HepG2 (cell line): ENCODE measurements at regions of chr6 and their contacts with region 1.

Region 1: GRCh38 chr6:28218271-28219248 is 6.5 kb upstream of the ZSCAN9 start:
- DNase-seq: peak; percentile 70
- ATAC-seq: peak; percentile 93
- H3K4me3 ChIP-seq: peak overlapping the region; percentile 53 to 77 (median 56)
- H3K27ac ChIP-seq: peak overlapping the region; percentile 79
- H3K4me1 ChIP-seq: peaks cover 55% of the 10 kb centered on the region
- H3K27me3 ChIP-seq: no peaks in the 10 kb centered on the region; a peak in 1 of 5 replicates
- CTCF ChIP-seq: peak; percentile 49
- EP300 ChIP-seq: no peak
- POLR2A ChIP-seq: peak; percentile 42 to 77; a peak in 2 of 4 replicates
- RAD21 ChIP-seq: peak; percentile 50

Region 2: DNA sequence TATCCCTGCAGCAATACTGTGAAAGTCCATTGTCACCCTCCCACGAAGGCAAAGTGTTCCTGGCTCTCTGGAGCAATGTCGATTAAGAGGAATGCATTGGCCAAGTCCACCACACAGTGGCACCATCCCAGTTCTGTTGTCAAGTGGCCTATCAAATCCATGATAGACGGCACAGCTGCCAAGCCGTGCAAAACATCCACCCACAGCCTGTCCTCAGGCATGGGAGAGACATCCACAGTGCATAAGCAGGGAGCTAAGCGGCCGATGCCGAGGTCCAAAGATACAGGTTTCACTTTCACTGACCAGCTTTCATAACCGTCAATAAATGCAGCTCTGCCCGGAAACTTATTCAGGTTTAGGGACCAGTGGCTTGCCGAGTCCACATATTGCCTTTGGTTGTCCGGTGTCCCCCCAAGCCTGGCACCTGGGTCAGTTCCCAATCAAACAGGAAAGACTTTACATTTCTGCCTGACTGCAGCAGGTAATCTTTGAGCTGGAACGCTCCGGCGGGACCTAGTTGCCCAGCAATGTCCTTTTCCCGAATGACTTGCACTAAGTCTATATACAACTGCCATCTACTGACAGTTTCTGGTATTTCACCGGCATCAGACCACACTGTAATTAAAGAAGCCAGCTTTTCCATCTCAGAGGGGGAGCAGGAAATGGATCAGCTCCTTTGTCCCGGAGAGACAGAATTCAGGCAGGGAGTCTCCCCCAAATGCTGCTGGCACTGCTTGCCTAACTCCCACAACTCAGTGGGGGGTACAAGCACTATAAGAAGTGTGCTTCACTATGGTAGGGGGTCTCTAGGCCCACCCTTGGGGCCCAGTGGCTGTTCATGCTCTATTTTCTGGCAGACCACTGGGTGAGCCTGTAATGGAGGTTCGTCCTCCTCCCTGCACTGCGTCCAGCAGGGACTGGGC is 137.4 kb after region 1 on chr6:
- CTCF ChIA-PET with region 1: no interaction called
- POLR2A ChIA-PET with region 1: interaction called, 12 read pairs
- in situ Hi-C with region 1: no loop called
- intact Hi-C with region 1: no loop called
- DNase-seq: peak; percentile 90
- ATAC-seq: peak; percentile 89
- H3K4me3 ChIP-seq: peak overlapping the region; percentile 70 to 82 (median 77)
- H3K27ac ChIP-seq: peak overlapping the region; percentile 75
- H3K4me1 ChIP-seq: peaks cover 33% of the 10 kb centered on the region
- H3K27me3 ChIP-seq: no peaks in the 10 kb centered on the region; a peak in 1 of 5 replicates
- CTCF ChIP-seq: peak; percentile 91
- EP300 ChIP-seq: no peak
- POLR2A ChIP-seq: peak in 1 of 2 experiments; percentile 65; a peak in 1 of 4 replicates
- RAD21 ChIP-seq: peak; percentile 81

Region 3: GRCh38 chr6:28940858-28941680 is 722.5 kb after region 1 on chr6:
- CTCF ChIA-PET with region 1: no interaction called
- POLR2A ChIA-PET with region 1: no interaction called
- in situ Hi-C with region 1: no loop called
- intact Hi-C with region 1: no loop called
- DNase-seq: peak; percentile 89
- ATAC-seq: peak; percentile 73
- H3K4me3 ChIP-seq: peak overlapping the region; percentile 68 to 85 (median 79)
- H3K27ac ChIP-seq: peak overlapping the region; percentile 63
- H3K4me1 ChIP-seq: peaks cover 44% of the 10 kb centered on the region
- H3K27me3 ChIP-seq: peaks cover 0 to 7% of the 10 kb centered on the region in 2 experiments; a peak in 1 of 5 replicates
- CTCF ChIP-seq: peak; percentile 13
- EP300 ChIP-seq: no peak
- POLR2A ChIP-seq: no peak
- RAD21 ChIP-seq: no peak